AG04449 (cell line): ENCODE measurements at regions of chr6 and their contacts with region 1.

Region 1: GRCh38 chr6:31049518-31049917 is 39.2 kb downstream of the MUC22 start:
- DNase-seq: no peak
- H3K4me3 ChIP-seq: no peak overlapping the region
- CTCF ChIP-seq: no peak

Region 2: GRCh38 chr6:30814136-30815040 is 235.1 kb before region 1 on chr6:
- CTCF ChIA-PET with region 1: no interaction called
- POLR2A ChIA-PET with region 1: no interaction called
- DNase-seq: no peak
- H3K4me3 ChIP-seq: no peak overlapping the region
- CTCF ChIP-seq: no peak

Region 3: DNA sequence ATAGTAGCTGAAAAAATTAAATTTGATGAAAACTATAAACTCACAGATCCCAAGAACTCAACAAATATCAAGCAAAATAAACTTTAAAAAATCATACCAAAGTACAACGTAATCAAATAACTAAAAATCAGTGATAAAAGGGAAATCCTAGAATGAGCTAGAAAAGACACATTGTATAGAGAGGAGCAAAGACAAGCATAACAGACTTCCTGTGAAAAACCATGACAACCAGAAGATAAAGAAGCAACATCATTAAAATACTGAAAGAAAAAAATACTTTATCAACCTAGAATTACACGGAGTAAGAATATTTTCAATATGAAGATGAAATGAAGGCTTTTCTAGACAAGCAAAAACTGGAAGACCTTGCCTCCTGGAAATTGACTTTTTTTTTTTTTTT is 29.5 kb before region 1 on chr6:
- CTCF ChIA-PET with region 1: no interaction called
- POLR2A ChIA-PET with region 1: no interaction called
- DNase-seq: no peak
- H3K4me3 ChIP-seq: no peak overlapping the region
- CTCF ChIP-seq: no peak

Region 4: GRCh38 chr6:31037682-31038081 is 11.8 kb before region 1 on chr6:
- CTCF ChIA-PET with region 1: interaction called, 13 read pairs
- POLR2A ChIA-PET with region 1: no interaction called
- DNase-seq: peak; percentile 67
- H3K4me3 ChIP-seq: no peak overlapping the region
- CTCF ChIP-seq: no peak

Region 5: GRCh38 chr6:31345026-31345730 is 295.7 kb after region 1 on chr6:
- CTCF ChIA-PET with region 1: no interaction called
- POLR2A ChIA-PET with region 1: no interaction called
- DNase-seq: no peak
- H3K4me3 ChIP-seq: no peak overlapping the region
- CTCF ChIP-seq: no peak